Activated CD8-positive, alpha-beta T cell treated with anti-CD3 and anti-CD28 coated beads for 36 hours (primary cell): ENCODE measurements at regions of chr20 and their contacts with region 1.

Region 1: GRCh38 chr20:50569864-50570836 is 60.0 kb downstream of the PTPN1 start:
- DNase-seq: peak; percentile 71
- ATAC-seq: peak; percentile 93
- H3K4me3 Mint-ChIP-seq: no peak overlapping the region
- H3K27ac Mint-ChIP-seq: peak overlapping the region; percentile 78
- H3K4me1 Mint-ChIP-seq: peaks cover 58% of the 10 kb centered on the region
- H3K27me3 Mint-ChIP-seq: no peaks in the 10 kb centered on the region
- CTCF ChIP-seq: peak; percentile 46

Region 2: DNA sequence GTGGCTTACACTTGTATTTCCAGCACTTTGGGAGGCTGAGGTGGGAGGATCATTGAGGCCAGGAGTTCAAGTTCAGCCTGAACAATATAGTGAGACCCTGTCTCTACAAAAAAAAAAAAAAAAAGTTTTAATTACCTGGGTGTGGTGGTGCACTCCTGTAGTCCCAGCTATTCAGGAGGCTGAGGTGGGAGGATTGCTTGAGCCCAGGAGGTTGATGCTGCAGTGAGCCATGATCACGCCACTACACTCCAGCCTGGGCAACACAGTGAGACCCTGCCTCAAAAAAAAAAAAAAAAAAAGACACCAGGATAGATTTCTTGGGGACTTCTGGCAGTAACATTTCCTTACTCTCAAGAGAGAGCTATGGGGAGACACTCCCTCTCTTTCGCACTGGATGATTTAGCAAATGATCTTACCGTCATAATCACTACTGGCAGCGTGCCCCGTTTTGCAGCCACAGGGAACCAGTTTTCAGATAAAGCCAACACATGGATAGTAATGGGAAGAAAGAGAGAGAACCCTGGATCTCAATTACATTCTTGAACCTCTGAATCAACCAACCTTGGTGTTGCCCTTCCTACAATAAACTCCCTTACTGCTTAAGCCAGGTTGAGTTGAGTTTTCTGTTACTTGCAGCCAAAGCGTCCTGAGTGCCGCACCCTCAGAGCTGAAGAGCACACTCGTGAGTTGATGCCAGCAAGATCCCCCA is 78.1 kb before region 1 on chr20:
- CTCF ChIA-PET with region 1: interaction called, 5 read pairs
- POLR2A ChIA-PET with region 1: interaction called, 4 read pairs
- intact Hi-C with region 1: loop called (anchors 5 kb)
- DNase-seq: no peak
- ATAC-seq: no peak
- H3K4me3 Mint-ChIP-seq: no peak overlapping the region
- H3K27ac Mint-ChIP-seq: peak overlapping the region; percentile 66
- H3K4me1 Mint-ChIP-seq: peaks cover 30% of the 10 kb centered on the region
- H3K27me3 Mint-ChIP-seq: no peaks in the 10 kb centered on the region
- CTCF ChIP-seq: no peak